AG04449 (cell line): ENCODE measurements at regions of chr7 and their contacts with region 1.

Region 1: DNA sequence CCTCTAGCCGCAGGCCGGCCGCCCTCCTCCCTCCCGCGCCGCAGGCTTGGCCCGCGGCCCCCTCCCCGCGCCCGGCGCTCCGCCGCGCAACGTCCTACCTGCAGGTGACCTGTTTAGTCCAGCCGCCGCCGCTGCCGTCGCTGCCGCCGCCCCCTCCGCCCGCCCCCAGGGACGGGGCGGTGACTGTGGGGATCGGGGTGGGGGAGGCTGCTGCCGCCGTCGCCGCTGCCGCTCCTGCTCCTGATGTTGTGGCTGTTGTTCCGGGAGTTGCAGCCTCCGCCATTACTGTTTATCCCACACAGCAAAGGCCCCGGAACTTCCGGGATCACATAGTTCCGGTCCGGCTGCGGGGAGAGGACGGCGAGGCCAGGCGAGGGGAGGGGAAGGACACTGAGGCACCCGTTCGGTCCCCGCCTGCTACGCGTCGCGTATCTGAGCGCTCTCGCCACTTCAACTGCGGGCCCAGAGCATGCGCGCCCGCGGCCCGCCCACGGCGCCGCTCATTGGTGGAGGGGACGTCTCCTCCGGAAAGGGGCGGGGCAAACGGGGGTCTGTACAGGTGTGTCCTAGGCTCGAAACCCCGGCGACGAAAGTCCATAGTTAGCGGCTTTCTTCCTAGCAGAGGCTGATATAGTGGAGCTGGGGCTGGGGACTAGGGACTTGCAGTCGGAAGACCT is at the start of gene MKRN1:
- DNase-seq: peak; percentile 47
- H3K4me3 ChIP-seq: peak within 1 kb of the TSS; percentile 81
- CTCF ChIP-seq: no peak

Region 2: DNA sequence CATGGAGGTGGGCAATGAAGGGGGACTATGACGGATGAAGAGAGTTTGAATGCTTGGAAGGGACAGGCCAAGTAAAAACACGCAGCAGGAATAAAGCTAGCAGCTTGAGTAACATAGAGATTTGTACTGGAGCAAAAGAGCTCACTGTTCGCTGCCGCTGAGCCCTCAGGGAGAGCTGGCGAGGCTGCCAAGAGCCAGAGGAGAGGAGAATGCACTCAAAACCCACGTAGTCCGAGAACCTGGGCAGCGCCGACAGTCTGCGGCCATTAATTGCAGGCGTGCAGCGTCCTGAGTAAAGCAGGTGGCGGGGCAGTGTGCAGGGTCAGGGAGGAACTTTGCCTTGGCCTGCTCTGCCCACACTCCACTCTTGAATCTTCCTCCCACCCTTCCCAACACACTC is 149.1 kb before region 1 on chr7:
- CTCF ChIA-PET with region 1: no interaction called
- POLR2A ChIA-PET with region 1: no interaction called
- DNase-seq: no peak
- H3K4me3 ChIP-seq: no peak overlapping the region
- CTCF ChIP-seq: no peak

Region 3: GRCh38 chr7:140463111-140463510 is 16.1 kb before region 1 on chr7:
- CTCF ChIA-PET with region 1: interaction called, 18 read pairs
- POLR2A ChIA-PET with region 1: no interaction called
- DNase-seq: no peak
- H3K4me3 ChIP-seq: no peak overlapping the region
- CTCF ChIP-seq: no peak